CD4-positive, alpha-beta memory T cell (primary cell): ENCODE measurements at regions of chr6 and their contacts with region 1.

Region 1: GRCh38 chr6:116929825-116930224 is 52.8 kb downstream of the RFX6 start:
- DNase-seq: no peak
- H3K4me3 ChIP-seq: no peak overlapping the region
- H3K4me3 Mint-ChIP-seq: no peak overlapping the region
- H3K27ac ChIP-seq: no peak overlapping the region
- H3K27ac Mint-ChIP-seq: no peak overlapping the region
- H3K4me1 ChIP-seq: no peaks in the 10 kb centered on the region
- H3K4me1 Mint-ChIP-seq: no peaks in the 10 kb centered on the region
- H3K27me3 ChIP-seq: no peaks in the 10 kb centered on the region
- H3K27me3 Mint-ChIP-seq: no peaks in the 10 kb centered on the region

Region 2: GRCh38 chr6:116881236-116881635 is 48.6 kb before region 1 on chr6:
- CTCF ChIA-PET with region 1: no interaction called
- POLR2A ChIA-PET with region 1: no interaction called
- intact Hi-C with region 1: loop called (anchors 1 kb)
- DNase-seq: no peak
- H3K4me3 ChIP-seq: no peak overlapping the region
- H3K4me3 Mint-ChIP-seq: no peak overlapping the region
- H3K27ac ChIP-seq: no peak overlapping the region
- H3K27ac Mint-ChIP-seq: no peak overlapping the region
- H3K4me1 ChIP-seq: no peaks in the 10 kb centered on the region
- H3K4me1 Mint-ChIP-seq: peaks cover 4 to 13% (median 6%) of the 10 kb centered on the region in 4 donors
- H3K27me3 ChIP-seq: no peaks in the 10 kb centered on the region
- H3K27me3 Mint-ChIP-seq: peaks cover 14% of the 10 kb centered on the region in 2 donors

Region 3: GRCh38 chr6:116990679-116991078 is 60.9 kb after region 1 on chr6:
- CTCF ChIA-PET with region 1: no interaction called
- POLR2A ChIA-PET with region 1: no interaction called
- intact Hi-C with region 1: no loop called
- DNase-seq: no peak
- H3K4me3 ChIP-seq: no peak overlapping the region
- H3K4me3 Mint-ChIP-seq: no peak overlapping the region
- H3K27ac ChIP-seq: no peak overlapping the region
- H3K27ac Mint-ChIP-seq: no peak overlapping the region
- H3K4me1 ChIP-seq: no peaks in the 10 kb centered on the region
- H3K4me1 Mint-ChIP-seq: no peaks in the 10 kb centered on the region
- H3K27me3 ChIP-seq: no peaks in the 10 kb centered on the region
- H3K27me3 Mint-ChIP-seq: no peaks in the 10 kb centered on the region